Activated CD4-positive, alpha-beta memory T cell treated with anti-CD3 and anti-CD28 coated beads for 36 hours (primary cell): ENCODE measurements at regions of chr3 and their contacts with region 1.

Region 1: DNA sequence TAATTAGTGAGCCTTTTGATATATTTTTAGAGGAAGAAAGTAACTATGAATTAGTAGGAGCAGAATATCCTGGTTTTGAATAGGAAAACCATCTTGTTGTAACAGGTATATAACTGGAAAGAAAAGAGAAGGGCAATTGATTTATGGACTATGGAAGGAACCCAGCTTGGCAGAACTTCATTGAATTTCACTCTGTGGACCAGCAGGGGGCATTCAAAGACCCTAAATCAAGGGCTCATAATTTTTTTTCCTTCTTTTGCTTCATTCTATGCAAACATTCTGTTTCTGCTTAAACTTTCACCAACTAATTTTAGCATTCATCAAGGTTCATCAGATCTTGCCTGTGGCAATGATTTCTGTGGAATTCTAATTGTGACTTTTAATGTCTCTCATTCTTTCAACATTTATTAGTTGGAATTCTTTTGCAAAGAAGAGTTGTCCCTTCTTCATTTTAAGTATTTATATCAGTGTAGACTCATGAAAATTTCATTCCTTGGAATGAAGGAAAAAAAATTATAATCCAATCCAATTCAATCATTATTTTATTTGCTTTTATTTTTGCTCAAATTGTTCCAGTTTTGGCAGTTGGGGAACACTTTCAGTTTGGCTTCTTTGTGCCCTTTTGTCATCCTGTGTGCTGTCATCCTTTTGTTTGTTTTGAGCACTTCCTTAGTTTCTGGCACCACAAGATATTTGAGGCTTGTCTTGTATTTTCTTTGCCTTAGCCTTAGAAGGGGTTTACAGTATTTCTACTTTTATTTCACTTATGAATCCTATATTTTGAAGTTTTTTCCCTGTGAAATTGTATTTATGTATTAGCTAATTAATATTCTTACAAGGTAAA is 30.4 kb downstream of the NXPE3 start:
- DNase-seq: peak; percentile 31
- H3K4me3 Mint-ChIP-seq: no peak overlapping the region
- H3K27ac Mint-ChIP-seq: no peak overlapping the region
- H3K4me1 Mint-ChIP-seq: peaks cover 43% of the 10 kb centered on the region
- H3K27me3 Mint-ChIP-seq: no peaks in the 10 kb centered on the region

Region 2: DNA sequence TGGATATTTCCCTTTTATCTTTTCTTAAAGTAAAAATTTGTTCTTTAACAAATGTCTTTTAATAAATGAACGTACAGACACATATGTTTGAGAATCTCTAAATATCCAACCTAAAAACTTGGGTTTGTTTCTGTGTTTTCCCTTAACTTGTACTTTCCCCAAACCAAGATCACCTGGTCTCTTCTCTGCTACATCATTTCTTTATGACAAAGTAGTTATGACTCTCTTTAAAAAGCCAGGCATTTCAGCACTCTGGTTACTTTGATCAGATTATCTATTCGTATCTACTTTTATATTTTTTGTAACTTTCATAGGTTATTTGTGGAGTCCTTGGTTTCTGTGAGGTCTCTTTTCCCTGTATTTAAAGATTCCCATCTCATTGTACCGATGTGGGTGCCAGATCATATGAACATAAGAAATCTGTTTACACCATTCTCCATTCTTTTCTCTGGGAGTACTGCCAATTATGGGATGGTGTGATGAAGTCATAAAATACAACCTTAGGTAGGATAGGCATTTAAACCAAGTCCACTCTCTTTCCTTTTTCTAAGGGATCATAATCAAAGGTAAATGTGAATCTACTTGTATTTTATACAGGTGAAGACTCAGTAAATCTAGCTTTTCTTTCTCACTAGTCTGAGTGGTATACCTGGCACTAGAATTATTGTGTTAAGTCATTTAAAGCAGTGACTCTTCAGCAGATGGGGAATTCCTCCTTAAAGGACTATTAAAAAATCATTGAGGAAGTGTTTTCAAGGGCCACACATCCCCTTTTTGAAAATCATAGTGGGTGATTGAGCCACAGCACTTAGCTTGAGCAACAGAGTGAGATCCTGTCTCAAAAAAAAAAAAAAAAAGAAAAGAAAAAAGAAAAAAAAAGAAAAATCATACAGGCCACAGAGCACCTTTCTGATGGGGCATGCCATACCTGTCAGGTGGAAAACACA is 27.5 kb after region 1 on chr3:
- CTCF ChIA-PET with region 1: no interaction called
- POLR2A ChIA-PET with region 1: no interaction called
- intact Hi-C with region 1: no loop called
- DNase-seq: no peak
- H3K4me3 Mint-ChIP-seq: no peak overlapping the region
- H3K27ac Mint-ChIP-seq: no peak overlapping the region
- H3K4me1 Mint-ChIP-seq: peaks cover 51% of the 10 kb centered on the region
- H3K27me3 Mint-ChIP-seq: no peaks in the 10 kb centered on the region

Region 3: GRCh38 chr3:102223132-102223531 is 413.7 kb after region 1 on chr3:
- CTCF ChIA-PET with region 1: interaction called, 391 read pairs
- POLR2A ChIA-PET with region 1: no interaction called
- intact Hi-C with region 1: loop called (anchors 1 kb)
- DNase-seq: peak; percentile 30
- H3K4me3 Mint-ChIP-seq: no peak overlapping the region
- H3K27ac Mint-ChIP-seq: no peak overlapping the region
- H3K4me1 Mint-ChIP-seq: peaks cover 26% of the 10 kb centered on the region
- H3K27me3 Mint-ChIP-seq: peaks cover 5% of the 10 kb centered on the region